ENCODE measurements at regions of chr2 and their contacts with region 1.

Region 1: GRCh38 chr2:42102591-42103464 is 55.0 kb downstream of the PKDCC start:
- DNase-seq: no peak
- H3K4me3 ChIP-seq: no peak overlapping the region
- H3K27ac ChIP-seq: no peak overlapping the region
- H3K4me1 ChIP-seq: peaks cover 34% of the 10 kb centered on the region
- H3K27me3 ChIP-seq: no peaks in the 10 kb centered on the region
- CTCF ChIP-seq: no peak

Region 2: GRCh38 chr2:42138163-42139016 is 35.6 kb after region 1 on chr2:
- CTCF ChIA-PET with region 1: no interaction called
- POLR2A ChIA-PET with region 1: interaction called, 10 read pairs
- intact Hi-C with region 1: no loop called
- DNase-seq: peak; percentile 98
- H3K4me3 ChIP-seq: no peak overlapping the region
- H3K27ac ChIP-seq: peak overlapping the region; percentile 56
- H3K4me1 ChIP-seq: peaks cover 88% of the 10 kb centered on the region
- H3K27me3 ChIP-seq: no peaks in the 10 kb centered on the region
- CTCF ChIP-seq: no peak